A673 (cell line): ENCODE measurements at regions of chr16 and their contacts with region 1.

Region 1: DNA sequence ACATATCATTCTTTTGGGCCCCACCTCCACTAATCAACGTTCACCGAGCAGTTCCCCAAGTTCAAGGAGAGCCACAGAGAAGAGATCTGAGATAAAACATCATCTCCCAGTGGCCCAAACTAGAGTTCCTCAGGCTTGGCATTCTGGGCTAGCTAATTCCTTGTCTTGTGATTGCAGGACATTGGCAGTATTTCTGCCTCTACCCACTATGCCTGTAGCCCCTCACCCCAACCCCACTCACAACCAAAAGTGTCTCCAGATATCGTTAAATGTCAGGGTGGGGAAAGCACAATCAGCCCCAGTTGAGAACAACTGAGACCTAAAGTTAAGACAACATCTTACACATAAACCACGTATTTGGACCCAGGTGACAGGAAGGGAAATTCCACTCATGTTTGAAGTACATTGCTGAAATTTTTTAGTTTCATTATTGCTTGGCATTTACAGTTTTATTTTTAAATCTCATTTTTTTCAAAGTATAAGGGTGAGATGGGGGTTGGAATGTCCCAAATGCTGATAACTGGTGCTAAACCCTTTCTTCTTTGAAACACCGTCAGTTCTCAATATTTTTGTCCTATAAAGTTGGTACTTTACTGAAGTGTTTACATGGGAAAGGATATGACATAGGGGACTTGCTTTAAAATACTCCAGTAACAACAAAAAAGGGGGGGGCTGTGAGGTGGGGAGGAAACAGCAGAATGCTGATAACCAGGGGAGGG is 13.6 kb downstream of the ZC3H7A start:
- DNase-seq: no peak
- H3K4me3 ChIP-seq: no peak overlapping the region
- H3K27ac ChIP-seq: peak overlapping the region; percentile 55
- H3K4me1 ChIP-seq: peaks cover 40% of the 10 kb centered on the region
- H3K27me3 ChIP-seq: no peaks in the 10 kb centered on the region
- CTCF ChIP-seq: no peak

Region 2: DNA sequence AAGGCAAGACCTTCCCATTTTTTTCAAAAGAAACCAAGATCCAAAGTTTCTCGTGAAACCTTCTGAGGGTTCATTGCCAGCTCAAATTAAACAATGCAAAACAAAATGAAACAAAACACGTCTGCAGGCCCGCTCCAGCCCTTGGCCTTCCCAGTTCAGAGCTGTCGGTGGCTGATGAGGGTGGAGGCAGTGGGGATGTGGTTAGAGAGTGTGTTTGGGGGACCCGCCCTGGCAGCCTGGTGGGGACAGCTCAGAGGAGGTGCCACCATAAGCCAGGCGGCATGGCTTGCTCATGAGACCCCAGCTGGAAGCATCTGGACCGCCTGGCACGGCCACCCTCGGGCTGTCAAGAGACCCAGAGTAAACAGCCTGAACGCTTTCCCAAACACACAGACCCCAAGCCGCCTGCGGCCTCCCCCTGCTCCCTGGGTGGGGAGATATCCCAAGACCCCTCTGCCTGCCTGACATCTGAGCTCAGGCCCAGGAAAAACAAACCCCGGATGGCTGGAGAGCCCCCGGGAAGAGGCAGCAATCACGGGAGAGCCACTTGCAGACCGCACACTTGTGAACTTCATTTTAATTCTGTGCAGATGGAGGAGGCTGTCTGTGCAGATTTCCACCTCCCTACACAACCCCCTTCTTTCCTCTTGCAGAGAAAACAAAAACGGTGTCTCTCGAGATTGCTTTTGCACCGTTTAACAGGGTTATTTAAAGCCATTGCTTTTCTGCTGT is 161.4 kb before region 1 on chr16:
- CTCF ChIA-PET with region 1: interaction called, 16 read pairs
- POLR2A ChIA-PET with region 1: no interaction called
- intact Hi-C with region 1: no loop called
- DNase-seq: no peak
- H3K4me3 ChIP-seq: no peak overlapping the region
- H3K27ac ChIP-seq: no peak overlapping the region
- H3K4me1 ChIP-seq: no peaks in the 10 kb centered on the region
- H3K27me3 ChIP-seq: no peaks in the 10 kb centered on the region
- CTCF ChIP-seq: no peak

Region 3: DNA sequence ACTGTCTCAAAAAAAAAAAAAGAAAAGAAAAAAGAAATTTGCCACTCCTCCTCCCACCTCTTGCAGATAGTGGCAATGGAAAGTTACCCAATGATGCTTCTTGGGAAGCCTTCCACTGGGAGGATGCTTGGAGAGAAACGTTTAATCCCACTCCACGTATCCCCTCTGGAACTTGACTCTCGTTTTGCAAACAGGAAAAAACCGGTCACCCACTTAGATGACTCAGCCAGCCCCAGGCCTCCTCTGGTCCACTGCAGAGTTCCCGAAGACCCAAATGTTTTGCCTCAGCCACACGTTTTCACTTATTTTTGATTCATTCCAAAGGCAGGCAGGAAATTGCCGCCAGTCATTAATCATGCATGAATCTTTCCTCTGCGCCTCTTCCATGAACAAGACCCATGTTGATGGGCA is 172.2 kb after region 1 on chr16:
- CTCF ChIA-PET with region 1: no interaction called
- POLR2A ChIA-PET with region 1: no interaction called
- intact Hi-C with region 1: no loop called
- DNase-seq: peak; percentile 74
- H3K4me3 ChIP-seq: no peak overlapping the region
- H3K27ac ChIP-seq: no peak overlapping the region
- H3K4me1 ChIP-seq: peaks cover 4% of the 10 kb centered on the region
- H3K27me3 ChIP-seq: no peaks in the 10 kb centered on the region
- CTCF ChIP-seq: no peak